Body of pancreas (tissue), 4 donors: ENCODE measurements at regions of chr7 and their contacts with region 1.

Region 1: DNA sequence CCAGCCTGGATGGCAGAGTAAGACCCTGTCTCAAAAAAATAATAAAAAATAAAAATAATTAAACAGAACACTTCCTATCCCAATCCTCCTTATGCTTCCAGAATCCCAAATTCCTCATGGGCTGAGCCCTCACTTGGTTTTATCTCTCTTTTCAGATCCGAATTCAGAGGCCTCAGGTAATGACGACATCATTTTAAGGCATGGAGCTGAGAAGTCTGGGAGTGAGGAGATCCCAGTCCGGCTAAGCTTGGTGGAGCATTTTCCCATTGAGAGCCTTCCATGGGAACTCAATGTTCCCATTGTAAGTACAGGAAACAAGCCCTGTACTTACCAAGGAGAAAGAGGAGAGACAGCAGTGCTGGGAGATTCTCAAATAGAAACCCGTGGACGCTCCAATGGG is 27.4 kb upstream of the TRIM56 start:
- DNase-seq: no peak
- ATAC-seq: no peak
- H3K4me3 ChIP-seq: no peak overlapping the region
- H3K27ac ChIP-seq: no peak overlapping the region
- H3K4me1 ChIP-seq: no peaks in the 10 kb centered on the region
- H3K27me3 ChIP-seq: peaks cover 0 to 9% of the 10 kb centered on the region in 2 donors
- CTCF ChIP-seq: no peak
- POLR2A ChIP-seq: no peak

Region 2: DNA sequence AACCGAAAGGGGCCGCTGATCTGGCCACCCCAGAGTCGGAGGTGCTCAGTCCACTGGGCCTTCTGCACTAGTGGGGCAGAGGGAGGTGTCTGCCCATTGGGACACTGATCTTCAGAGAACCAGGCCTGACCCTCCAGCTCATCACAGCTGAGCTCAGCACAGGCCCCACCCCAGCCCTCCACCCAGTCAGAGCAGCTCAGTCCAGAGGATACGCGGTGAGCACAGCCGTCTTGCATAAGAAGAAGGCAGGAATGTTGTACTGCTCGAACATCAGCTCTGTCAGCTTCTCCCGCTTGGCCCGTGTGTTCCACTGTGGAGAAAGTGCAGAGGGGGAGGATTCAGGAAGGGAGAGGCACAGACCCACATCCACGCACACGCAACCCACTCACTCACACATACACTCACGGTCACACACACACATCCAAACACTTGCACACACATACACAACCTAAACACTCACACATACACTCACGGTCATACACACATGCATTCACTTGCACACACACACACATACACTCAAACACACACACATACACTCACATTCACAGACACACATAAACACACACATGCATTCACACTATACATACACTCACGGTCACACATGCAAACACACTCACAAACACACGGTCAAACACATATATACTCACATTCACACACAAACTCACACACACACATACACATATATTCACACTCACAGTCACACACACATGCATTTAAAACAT is 407.9 kb before region 1 on chr7:
- intact Hi-C with region 1: no loop called
- DNase-seq: no peak
- ATAC-seq: no peak
- H3K4me3 ChIP-seq: no peak overlapping the region
- H3K27ac ChIP-seq: no peak overlapping the region
- H3K4me1 ChIP-seq: no peaks in the 10 kb centered on the region
- H3K27me3 ChIP-seq: peaks cover 0 to 5% of the 10 kb centered on the region in 2 donors
- CTCF ChIP-seq: no peak
- POLR2A ChIP-seq: no peak

Region 3: DNA sequence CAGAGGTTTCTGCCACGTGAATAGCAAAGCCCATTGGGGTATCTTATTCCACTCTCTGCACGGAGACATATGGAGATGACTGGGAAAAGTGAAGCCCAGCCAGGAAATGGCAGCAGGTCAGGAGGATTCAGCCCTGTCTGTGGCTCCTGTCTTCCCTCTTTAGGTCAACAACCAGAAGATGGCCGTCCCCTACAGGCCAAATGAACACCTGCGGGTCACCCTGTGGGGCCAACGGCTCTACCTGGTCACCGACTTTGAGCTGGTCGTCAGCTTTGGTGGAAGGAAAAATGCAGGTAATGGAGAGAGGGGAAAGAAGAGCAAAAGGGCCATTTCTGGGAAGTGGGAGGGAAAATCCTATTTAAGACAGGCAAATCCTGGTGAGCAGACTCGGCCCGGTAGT is 268.8 kb before region 1 on chr7:
- intact Hi-C with region 1: no loop called
- DNase-seq: no peak
- ATAC-seq: no peak
- H3K4me3 ChIP-seq: no peak overlapping the region
- H3K27ac ChIP-seq: no peak overlapping the region
- H3K4me1 ChIP-seq: peaks cover 14% of the 10 kb centered on the region
- H3K27me3 ChIP-seq: no peaks in the 10 kb centered on the region
- CTCF ChIP-seq: no peak
- POLR2A ChIP-seq: no peak

Region 4: GRCh38 chr7:100874577-100875355 is 183.1 kb before region 1 on chr7 and contains the start of gene SRRT:
- intact Hi-C with region 1: no loop called
- DNase-seq: peak; percentile 98 to 99 (median 99)
- ATAC-seq: peak; percentile 98
- H3K4me3 ChIP-seq: peak within 1 kb of the TSS; percentile 69 to 94
- H3K27ac ChIP-seq: peak within 1 kb of the TSS; percentile 79 to 96 (median 89)
- H3K4me1 ChIP-seq: peaks cover 44% of the 10 kb centered on the region
- H3K27me3 ChIP-seq: no peaks in the 10 kb centered on the region
- CTCF ChIP-seq: peak in 6 of 7 experiments; percentile 30 to 86 (median 82)
- POLR2A ChIP-seq: peak; percentile 92 to 98 (median 98)
- total RNA-seq, gene SRRT: 54.7 to 60.7 TPM

Region 5: GRCh38 chr7:100894860-100895421 is 162.9 kb before region 1 on chr7:
- intact Hi-C with region 1: loop called (anchors 2 kb)
- DNase-seq: peak; percentile 37 to 64 (median 55)
- ATAC-seq: no peak
- H3K4me3 ChIP-seq: peak overlapping the region; percentile 6 to 18
- H3K27ac ChIP-seq: no peak overlapping the region
- H3K4me1 ChIP-seq: peaks cover 49% of the 10 kb centered on the region
- H3K27me3 ChIP-seq: peaks cover 0 to 18% of the 10 kb centered on the region in 2 donors
- CTCF ChIP-seq: peak; percentile 75 to 82 (median 80)
- POLR2A ChIP-seq: no peak

Region 6: GRCh38 chr7:100921039-100921438 is 136.8 kb before region 1 on chr7:
- intact Hi-C with region 1: no loop called
- DNase-seq: no peak
- ATAC-seq: no peak
- H3K4me3 ChIP-seq: no peak overlapping the region
- H3K27ac ChIP-seq: no peak overlapping the region
- H3K4me1 ChIP-seq: no peaks in the 10 kb centered on the region
- H3K27me3 ChIP-seq: no peaks in the 10 kb centered on the region
- CTCF ChIP-seq: no peak
- POLR2A ChIP-seq: no peak